Sciatic nerve (tissue), 2 donors: ENCODE measurements at regions of chr4 and their contacts with region 1.

Region 1: DNA sequence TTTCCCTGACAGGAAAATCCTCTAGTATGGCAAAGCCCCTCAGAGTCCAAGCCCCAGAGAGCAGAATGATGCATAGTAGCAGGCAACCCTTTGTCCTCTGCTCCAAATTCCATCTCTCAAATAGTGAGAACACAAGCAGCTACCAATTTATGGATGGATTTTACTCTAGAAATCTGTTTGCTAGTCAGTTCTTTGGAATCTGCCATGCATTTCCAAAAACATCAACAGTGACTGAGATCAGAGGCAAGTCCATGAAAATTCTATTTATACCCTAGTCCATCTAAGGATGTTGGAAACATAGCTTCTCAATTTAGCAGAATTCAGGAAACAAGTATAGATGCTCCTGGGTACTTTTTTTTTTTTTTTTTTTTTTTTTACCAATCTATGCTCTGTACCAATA is 10.0 kb upstream of the CC2D2A start:
- DNase-seq: no peak
- ATAC-seq: no peak

Region 2: DNA sequence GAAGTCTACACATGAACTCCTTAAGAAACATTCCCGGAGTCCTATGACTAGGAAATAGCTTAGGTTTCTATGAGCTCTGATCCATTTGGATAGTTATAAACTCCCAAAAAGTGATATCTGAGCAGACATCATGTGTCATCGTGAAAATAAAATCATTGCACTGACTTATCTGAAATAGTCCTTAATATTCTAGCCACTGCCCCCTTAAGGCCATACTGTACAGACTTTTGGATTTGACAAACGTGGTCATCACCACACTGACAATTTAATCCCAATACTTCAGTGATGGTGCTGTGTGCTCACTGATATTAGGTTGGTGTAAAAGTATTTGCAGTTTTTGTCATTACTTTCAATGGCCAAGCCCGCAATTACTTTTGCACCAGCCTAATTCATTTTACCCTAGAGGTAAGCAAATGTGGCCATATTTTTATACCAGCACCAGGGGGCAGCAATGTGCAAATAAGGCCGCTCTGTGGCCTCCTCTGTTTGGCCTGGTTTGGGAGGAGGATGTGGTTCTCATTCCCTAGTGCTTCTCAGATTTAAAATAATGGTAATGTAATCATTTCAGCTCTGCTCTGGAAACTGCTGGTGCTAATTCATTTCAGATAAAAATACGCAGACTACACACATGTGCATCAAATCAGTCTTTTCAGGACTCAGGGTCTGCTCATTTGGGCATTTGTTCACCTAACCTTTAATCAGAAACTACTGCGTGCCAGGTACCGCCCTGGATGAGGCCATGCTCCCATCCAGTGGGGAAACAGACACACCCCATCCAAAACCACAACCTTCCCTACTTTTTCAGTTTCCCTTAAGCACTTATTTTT is 228.2 kb before region 1 on chr4:
- intact Hi-C with region 1: loop called (anchors 5 kb)
- DNase-seq: peak; percentile 89
- ATAC-seq: peak; percentile 89